Common myeloid progenitor, CD34-positive (primary cell): ENCODE measurements at regions of chr11 and their contacts with region 1.

Region 1: GRCh38 chr11:117199061-117199915 is at the start of gene TAGLN:
- DNase-seq: no peak
- H3K4me3 ChIP-seq: peak within 1 kb of the TSS in 2 of 7 experiments; percentile 28 to 33
- H3K27ac ChIP-seq: no peak within 1 kb of the TSS
- H3K4me1 ChIP-seq: peaks cover 0 to 7% (median 2%) of the 10 kb centered on the region in 4 experiments
- H3K27me3 ChIP-seq: no peaks in the 10 kb centered on the region

Region 2: GRCh38 chr11:117210620-117211019 is 11.3 kb after region 1 on chr11:
- CTCF ChIA-PET with region 1: interaction called, 15 read pairs
- POLR2A ChIA-PET with region 1: no interaction called
- DNase-seq: no peak
- H3K4me3 ChIP-seq: no peak overlapping the region
- H3K27ac ChIP-seq: no peak overlapping the region
- H3K4me1 ChIP-seq: no peaks in the 10 kb centered on the region
- H3K27me3 ChIP-seq: no peaks in the 10 kb centered on the region